ENCODE measurements at regions of chr11 and their contacts with region 1.

Region 1: GRCh38 chr11:118304568-118305248 is at the start of gene CD3E:
- DNase-seq: peak; percentile 29 to 85 (median 73)
- ATAC-seq: peak; percentile 68
- H3K4me3 ChIP-seq: peak within 1 kb of the TSS; percentile 83 to 90
- H3K4me3 Mint-ChIP-seq: peak within 1 kb of the TSS; percentile 99
- H3K27ac ChIP-seq: peak within 1 kb of the TSS; percentile 76 to 86
- H3K27ac Mint-ChIP-seq: peak within 1 kb of the TSS; percentile 100
- H3K4me1 ChIP-seq: peaks cover 54% of the 10 kb centered on the region
- H3K4me1 Mint-ChIP-seq: peaks cover 82% of the 10 kb centered on the region
- H3K27me3 ChIP-seq: no peaks in the 10 kb centered on the region
- H3K27me3 Mint-ChIP-seq: no peaks in the 10 kb centered on the region
- CTCF ChIP-seq: no peak
- total RNA-seq, gene CD3E: 413 to 436 TPM

Region 2: DNA sequence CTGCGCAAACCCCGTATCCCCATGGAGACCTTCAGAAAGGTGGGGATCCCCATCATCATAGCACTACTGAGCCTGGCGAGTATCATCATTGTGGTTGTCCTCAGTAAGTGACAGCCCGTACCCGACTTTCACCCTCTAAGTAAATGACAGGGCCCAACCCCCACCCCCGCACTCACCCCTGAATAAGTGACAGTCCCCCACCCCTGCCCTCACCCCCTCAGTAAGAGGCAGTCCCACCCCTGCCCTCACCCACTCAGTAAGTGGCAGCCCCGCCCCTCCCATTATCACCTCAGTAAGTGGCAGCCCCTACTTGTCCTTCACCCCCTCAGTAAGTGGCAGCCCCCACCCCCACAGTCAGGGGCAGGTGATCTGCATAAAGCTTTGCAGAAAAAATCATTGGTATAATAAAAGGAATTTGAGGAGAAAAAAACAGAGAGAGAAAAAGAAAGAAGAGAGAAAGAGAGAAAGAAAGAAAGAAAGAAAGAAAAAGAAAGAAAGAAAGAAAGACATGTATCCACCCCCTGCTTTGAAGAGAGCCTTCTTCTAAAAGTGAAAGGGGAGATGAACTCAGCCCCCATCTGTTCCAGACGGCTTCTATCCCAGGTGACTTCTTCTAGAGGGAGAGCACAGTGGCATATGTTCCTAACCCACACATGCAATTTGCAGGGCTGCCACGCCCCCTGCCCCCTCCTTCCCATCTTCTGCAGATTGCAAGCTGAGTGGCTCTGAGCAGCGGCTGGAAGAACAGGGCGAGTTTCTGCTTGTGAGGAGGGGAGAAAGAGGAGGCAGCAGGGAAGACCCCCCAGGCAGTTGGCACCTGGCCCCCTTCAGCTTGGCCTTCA is 205.5 kb before region 1 on chr11:
- CTCF ChIA-PET with region 1: no interaction called
- POLR2A ChIA-PET with region 1: no interaction called
- intact Hi-C with region 1: no loop called
- DNase-seq: no peak
- ATAC-seq: no peak
- H3K4me3 ChIP-seq: no peak overlapping the region
- H3K4me3 Mint-ChIP-seq: no peak overlapping the region
- H3K27ac ChIP-seq: no peak overlapping the region
- H3K27ac Mint-ChIP-seq: no peak overlapping the region
- H3K4me1 ChIP-seq: no peaks in the 10 kb centered on the region
- H3K4me1 Mint-ChIP-seq: no peaks in the 10 kb centered on the region
- H3K27me3 ChIP-seq: no peaks in the 10 kb centered on the region
- H3K27me3 Mint-ChIP-seq: no peaks in the 10 kb centered on the region
- CTCF ChIP-seq: no peak

Region 3: GRCh38 chr11:118227865-118228785 is 76.6 kb before region 1 on chr11:
- CTCF ChIA-PET with region 1: no interaction called
- POLR2A ChIA-PET with region 1: interaction called, 23 read pairs
- intact Hi-C with region 1: no loop called
- DNase-seq: peak in 3 of 9 experiments; percentile 19 to 82 (median 77)
- ATAC-seq: peak; percentile 13
- H3K4me3 ChIP-seq: peak overlapping the region in 1 of 2 experiments; percentile 1
- H3K4me3 Mint-ChIP-seq: peak overlapping the region; percentile 48
- H3K27ac ChIP-seq: peak overlapping the region; percentile 8 to 46
- H3K27ac Mint-ChIP-seq: no peak overlapping the region
- H3K4me1 ChIP-seq: peaks cover 66% of the 10 kb centered on the region
- H3K4me1 Mint-ChIP-seq: peaks cover 49% of the 10 kb centered on the region
- H3K27me3 ChIP-seq: no peaks in the 10 kb centered on the region
- H3K27me3 Mint-ChIP-seq: no peaks in the 10 kb centered on the region
- CTCF ChIP-seq: no peak

Region 4: GRCh38 chr11:118258410-118258809 is 46.3 kb before region 1 on chr11:
- CTCF ChIA-PET with region 1: interaction called, 5 read pairs
- POLR2A ChIA-PET with region 1: interaction called, 3 read pairs
- intact Hi-C with region 1: loop called (anchors 5 kb)
- DNase-seq: peak in 1 of 9 experiments; percentile 29
- ATAC-seq: no peak
- H3K4me3 ChIP-seq: no peak overlapping the region
- H3K4me3 Mint-ChIP-seq: no peak overlapping the region
- H3K27ac ChIP-seq: no peak overlapping the region
- H3K27ac Mint-ChIP-seq: no peak overlapping the region
- H3K4me1 ChIP-seq: peaks cover 28% of the 10 kb centered on the region
- H3K4me1 Mint-ChIP-seq: peaks cover 33% of the 10 kb centered on the region
- H3K27me3 ChIP-seq: no peaks in the 10 kb centered on the region
- H3K27me3 Mint-ChIP-seq: no peaks in the 10 kb centered on the region
- CTCF ChIP-seq: no peak

Region 5: DNA sequence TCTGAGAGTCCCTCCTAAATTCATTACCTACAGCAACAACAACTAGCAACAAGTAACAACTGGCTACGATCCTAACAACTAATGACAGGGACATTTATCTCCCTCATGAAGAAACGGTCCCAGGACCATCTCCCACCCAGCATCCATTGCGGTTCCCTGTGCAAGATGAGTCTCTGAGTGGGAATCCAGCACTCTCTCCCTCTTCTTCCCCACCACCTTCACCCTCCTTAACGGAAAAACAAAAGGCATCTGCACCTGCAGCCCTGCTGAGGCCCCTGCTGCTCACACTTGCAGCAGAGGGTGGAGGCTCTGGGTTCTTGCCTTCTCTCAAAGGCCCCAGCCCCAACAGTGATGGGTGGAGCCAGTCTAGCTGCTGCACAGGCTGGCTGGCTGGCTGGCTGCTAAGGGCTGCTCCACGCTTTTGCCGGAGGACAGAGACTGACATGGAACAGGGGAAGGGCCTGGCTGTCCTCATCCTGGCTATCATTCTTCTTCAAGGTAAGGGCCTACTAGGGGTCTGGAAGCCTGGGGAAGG is 39.3 kb after region 1 on chr11 and contains the start of gene CD3G:
- CTCF ChIA-PET with region 1: no interaction called
- POLR2A ChIA-PET with region 1: interaction called, 336 read pairs
- intact Hi-C with region 1: loop called (anchors 1 kb)
- DNase-seq: peak; percentile 50 to 87 (median 79)
- ATAC-seq: peak; percentile 68
- H3K4me3 ChIP-seq: peak within 1 kb of the TSS; percentile 87 to 92
- H3K4me3 Mint-ChIP-seq: peak within 1 kb of the TSS; percentile 93
- H3K27ac ChIP-seq: peak within 1 kb of the TSS; percentile 72 to 94
- H3K27ac Mint-ChIP-seq: peak within 1 kb of the TSS; percentile 99
- H3K4me1 ChIP-seq: peaks cover 40% of the 10 kb centered on the region
- H3K4me1 Mint-ChIP-seq: peaks cover 80% of the 10 kb centered on the region
- H3K27me3 ChIP-seq: no peaks in the 10 kb centered on the region
- H3K27me3 Mint-ChIP-seq: no peaks in the 10 kb centered on the region
- CTCF ChIP-seq: no peak
- total RNA-seq, gene CD3G: 88.8 to 98.6 TPM

Region 6: GRCh38 chr11:118359295-118359958 is 54.7 kb after region 1 on chr11 and contains the start of gene UBE4A:
- CTCF ChIA-PET with region 1: interaction called, 7 read pairs
- POLR2A ChIA-PET with region 1: interaction called, 21 read pairs
- intact Hi-C with region 1: no loop called
- DNase-seq: peak; percentile 93 to 100 (median 99)
- ATAC-seq: peak; percentile 80
- H3K4me3 ChIP-seq: peak within 1 kb of the TSS; percentile 66 to 89
- H3K4me3 Mint-ChIP-seq: peak within 1 kb of the TSS; percentile 93
- H3K27ac ChIP-seq: peak within 1 kb of the TSS; percentile 89 to 93
- H3K27ac Mint-ChIP-seq: peak within 1 kb of the TSS; percentile 98
- H3K4me1 ChIP-seq: peaks cover 38% of the 10 kb centered on the region
- H3K4me1 Mint-ChIP-seq: peaks cover 52% of the 10 kb centered on the region
- H3K27me3 ChIP-seq: no peaks in the 10 kb centered on the region
- H3K27me3 Mint-ChIP-seq: no peaks in the 10 kb centered on the region
- CTCF ChIP-seq: no peak
- total RNA-seq, gene UBE4A: 53.7 to 57.5 TPM

Measured in CD8-positive, alpha-beta T cell (primary cell).